ENCODE measurements at regions of chr1 and their contacts with region 1.

Region 1: DNA sequence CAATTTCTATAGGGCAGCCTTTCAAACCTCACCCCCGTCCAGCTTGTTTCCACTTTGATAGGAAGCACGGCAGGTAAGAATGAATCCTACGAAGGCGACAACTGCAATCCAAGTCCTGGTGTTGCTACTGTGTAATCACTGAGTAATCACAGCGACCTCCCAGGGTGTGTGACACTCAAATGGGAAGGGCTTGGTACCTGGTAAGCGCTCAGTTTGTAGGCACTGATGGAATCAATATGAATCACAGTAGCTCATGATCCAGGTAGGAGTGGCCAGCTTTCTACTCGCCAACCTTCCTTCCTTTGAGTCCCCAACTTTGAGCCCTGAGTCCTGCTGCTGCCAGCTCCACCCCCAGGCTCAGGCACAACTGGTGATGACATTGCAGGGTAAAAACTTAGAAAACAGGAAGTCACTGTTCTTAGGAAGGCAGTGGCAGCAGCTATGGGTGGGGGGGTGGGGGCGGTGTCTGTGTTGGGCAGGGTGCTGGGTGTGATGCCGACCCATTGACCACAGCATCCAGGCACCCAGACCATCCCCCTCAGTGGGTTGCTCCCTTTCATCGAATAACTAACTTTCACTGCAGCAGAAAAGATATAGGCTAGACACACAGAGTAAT is 70.7 kb downstream of the CD247 start:
- DNase-seq: peak; percentile 83
- ATAC-seq: peak; percentile 75
- H3K4me3 Mint-ChIP-seq: peak overlapping the region; percentile 67
- H3K27ac Mint-ChIP-seq: peak overlapping the region; percentile 94
- H3K4me1 Mint-ChIP-seq: peaks cover 91% of the 10 kb centered on the region
- H3K27me3 Mint-ChIP-seq: no peaks in the 10 kb centered on the region

Region 2: GRCh38 chr1:167491586-167492461 is 44.2 kb after region 1 on chr1:
- CTCF ChIA-PET with region 1: interaction called, 11 read pairs
- POLR2A ChIA-PET with region 1: interaction called, 3 read pairs
- DNase-seq: peak; percentile 73
- ATAC-seq: peak; percentile 65
- H3K4me3 Mint-ChIP-seq: peak overlapping the region; percentile 77
- H3K27ac Mint-ChIP-seq: peak overlapping the region; percentile 94
- H3K4me1 Mint-ChIP-seq: peaks cover 92% of the 10 kb centered on the region
- H3K27me3 Mint-ChIP-seq: no peaks in the 10 kb centered on the region

Region 3: GRCh38 chr1:167499664-167500101 is 52.1 kb after region 1 on chr1:
- CTCF ChIA-PET with region 1: interaction called, 11 read pairs
- POLR2A ChIA-PET with region 1: interaction called, 13 read pairs
- DNase-seq: peak; percentile 60
- ATAC-seq: peak; percentile 61
- H3K4me3 Mint-ChIP-seq: peak overlapping the region; percentile 66
- H3K27ac Mint-ChIP-seq: peak overlapping the region; percentile 86
- H3K4me1 Mint-ChIP-seq: peaks cover 100% of the 10 kb centered on the region
- H3K27me3 Mint-ChIP-seq: no peaks in the 10 kb centered on the region

Region 4: GRCh38 chr1:167676205-167676915 is 228.7 kb after region 1 on chr1:
- CTCF ChIA-PET with region 1: no interaction called
- POLR2A ChIA-PET with region 1: no interaction called
- DNase-seq: no peak
- ATAC-seq: no peak
- H3K4me3 Mint-ChIP-seq: no peak overlapping the region
- H3K27ac Mint-ChIP-seq: peak overlapping the region; percentile 12
- H3K4me1 Mint-ChIP-seq: peaks cover 22% of the 10 kb centered on the region
- H3K27me3 Mint-ChIP-seq: no peaks in the 10 kb centered on the region

Measured in activated CD8-positive, alpha-beta T cell treated with anti-CD3 and anti-CD28 coated beads, Interleukin-2, amount 10 ng/mL, durations not matched to agents 7 days and 5 days (primary cell).